B cell (primary cell): ENCODE measurements at regions of chr6 and their contacts with region 1.

Region 1: GRCh38 chr6:169959136-169960002 is 207.9 kb downstream of the ERMARD start:
- DNase-seq: peak; percentile 87
- ATAC-seq: peak; percentile 93
- H3K4me3 ChIP-seq: peak overlapping the region in 4 of 5 experiments; percentile 12 to 35 (median 34)
- H3K4me3 Mint-ChIP-seq: peak overlapping the region; percentile 75
- H3K27ac ChIP-seq: peak overlapping the region; percentile 70 to 81
- H3K27ac Mint-ChIP-seq: peak overlapping the region; percentile 86
- H3K4me1 ChIP-seq: peaks cover 24 to 26% of the 10 kb centered on the region in 2 donors
- H3K4me1 Mint-ChIP-seq: peaks cover 23% of the 10 kb centered on the region
- H3K27me3 ChIP-seq: peaks cover 0 to 25% (median 3%) of the 10 kb centered on the region in 4 experiments
- H3K27me3 Mint-ChIP-seq: peaks cover 10% of the 10 kb centered on the region
- CTCF ChIP-seq: no peak

Region 2: DNA sequence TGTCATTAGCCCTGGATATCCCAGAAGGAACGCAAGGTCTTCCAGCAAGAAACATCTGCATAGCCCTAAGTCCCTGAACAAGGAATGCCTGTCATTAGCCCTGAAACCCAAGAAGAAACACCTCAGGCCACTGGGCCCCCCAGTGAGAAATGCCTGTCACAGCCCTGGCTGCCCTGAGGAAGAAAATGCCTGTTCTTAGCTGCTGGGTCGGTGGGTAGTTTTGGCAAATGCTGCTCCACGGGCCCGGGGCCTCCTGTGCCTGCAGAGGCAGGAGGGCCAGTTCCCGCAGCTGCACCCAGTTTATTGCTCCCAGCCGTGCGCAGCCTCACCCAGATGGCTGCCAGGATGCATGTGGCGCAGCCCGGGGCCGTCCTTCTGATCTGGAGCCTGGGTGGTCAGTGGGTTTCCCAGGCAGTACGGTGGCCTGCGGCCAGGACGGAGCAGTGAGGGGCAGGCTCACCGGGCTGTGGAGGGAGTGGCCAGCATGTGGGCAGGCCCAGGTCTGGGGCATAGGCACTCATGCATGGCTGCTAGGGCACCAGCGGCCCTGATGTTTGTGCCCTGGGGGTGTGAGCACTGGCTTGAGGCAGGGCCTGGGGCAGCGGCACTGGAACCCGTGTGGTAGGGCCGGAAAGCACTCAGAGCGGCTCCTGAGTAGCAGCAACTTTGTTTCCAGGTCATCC is 11.1 kb after region 1 on chr6:
- CTCF ChIA-PET with region 1: no interaction called
- POLR2A ChIA-PET with region 1: no interaction called
- intact Hi-C with region 1: no loop called
- DNase-seq: no peak
- ATAC-seq: no peak
- H3K4me3 ChIP-seq: no peak overlapping the region
- H3K4me3 Mint-ChIP-seq: no peak overlapping the region
- H3K27ac ChIP-seq: no peak overlapping the region
- H3K27ac Mint-ChIP-seq: no peak overlapping the region
- H3K4me1 ChIP-seq: no peaks in the 10 kb centered on the region
- H3K4me1 Mint-ChIP-seq: peaks cover 5% of the 10 kb centered on the region
- H3K27me3 ChIP-seq: no peaks in the 10 kb centered on the region
- H3K27me3 Mint-ChIP-seq: peaks cover 3% of the 10 kb centered on the region
- CTCF ChIP-seq: no peak

Region 3: DNA sequence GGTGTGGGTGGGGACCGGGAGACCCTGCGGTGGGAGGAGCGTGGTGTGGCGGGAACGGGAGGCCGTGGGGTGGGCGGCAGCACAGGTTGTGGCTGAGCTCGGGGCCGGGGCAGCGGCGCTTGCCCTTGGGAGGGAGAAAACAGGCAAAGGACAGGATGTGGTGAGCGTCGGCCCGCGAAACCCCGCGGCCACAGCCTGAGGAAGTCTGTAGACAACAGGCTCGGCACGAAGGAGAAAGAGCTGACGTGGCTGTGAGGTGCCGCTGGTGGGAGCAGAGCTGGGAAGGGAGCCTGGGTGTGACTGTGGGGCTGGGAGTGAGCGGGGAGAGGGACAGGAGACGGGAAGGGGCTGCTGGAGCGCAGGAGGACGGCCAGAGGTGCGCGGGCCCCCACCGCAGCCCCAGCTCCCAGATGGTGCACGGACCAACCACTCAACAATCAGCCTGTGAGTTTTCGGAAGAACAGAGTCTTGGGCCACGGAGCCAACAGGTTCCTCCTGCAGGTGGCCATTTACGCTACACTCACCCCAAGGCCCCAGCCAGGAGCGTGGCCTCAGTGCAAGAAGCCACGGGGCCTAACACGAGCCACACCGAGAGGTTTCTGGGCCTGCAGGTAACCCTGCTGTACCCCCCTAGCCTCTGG is 128.7 kb after region 1 on chr6:
- CTCF ChIA-PET with region 1: no interaction called
- POLR2A ChIA-PET with region 1: no interaction called
- intact Hi-C with region 1: loop called (anchors 10 kb)
- DNase-seq: peak; percentile 78
- ATAC-seq: peak; percentile 55
- H3K4me3 ChIP-seq: peak overlapping the region in 4 of 5 experiments; percentile 55 to 75 (median 62)
- H3K4me3 Mint-ChIP-seq: peak overlapping the region; percentile 89
- H3K27ac ChIP-seq: peak overlapping the region; percentile 75 to 80
- H3K27ac Mint-ChIP-seq: peak overlapping the region; percentile 94
- H3K4me1 ChIP-seq: peaks cover 26 to 29% of the 10 kb centered on the region in 2 donors
- H3K4me1 Mint-ChIP-seq: peaks cover 33% of the 10 kb centered on the region
- H3K27me3 ChIP-seq: no peaks in the 10 kb centered on the region
- H3K27me3 Mint-ChIP-seq: no peaks in the 10 kb centered on the region
- CTCF ChIP-seq: no peak

Region 4: DNA sequence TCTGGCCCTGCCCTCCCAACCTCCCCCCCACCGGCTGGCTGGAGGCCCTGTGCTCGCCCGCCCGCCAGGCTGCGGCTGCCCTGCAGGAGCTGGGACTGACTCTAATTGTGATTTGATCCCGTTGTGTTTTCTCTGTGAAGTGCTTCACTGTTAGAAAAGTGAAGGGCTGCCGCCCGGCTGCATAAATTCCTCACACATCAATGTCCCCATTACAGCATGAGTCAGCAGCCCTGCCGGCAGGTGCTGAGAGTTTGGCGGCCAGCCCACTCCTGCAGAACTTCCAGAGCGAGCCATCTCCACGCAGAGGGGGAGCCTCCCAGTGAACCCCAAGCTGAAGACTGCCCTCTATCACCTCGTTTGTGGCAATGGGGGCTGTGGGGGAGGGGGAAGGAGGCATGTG is 193.6 kb after region 1 on chr6:
- CTCF ChIA-PET with region 1: no interaction called
- POLR2A ChIA-PET with region 1: no interaction called
- intact Hi-C with region 1: no loop called
- DNase-seq: no peak
- ATAC-seq: no peak
- H3K4me3 ChIP-seq: no peak overlapping the region
- H3K4me3 Mint-ChIP-seq: no peak overlapping the region
- H3K27ac ChIP-seq: no peak overlapping the region
- H3K27ac Mint-ChIP-seq: no peak overlapping the region
- H3K4me1 ChIP-seq: peaks cover 5 to 10% of the 10 kb centered on the region in 2 donors
- H3K4me1 Mint-ChIP-seq: peaks cover 6% of the 10 kb centered on the region
- H3K27me3 ChIP-seq: peaks cover 0 to 15% (median 2%) of the 10 kb centered on the region in 4 experiments
- H3K27me3 Mint-ChIP-seq: peaks cover 31% of the 10 kb centered on the region
- CTCF ChIP-seq: no peak